CD4-positive, alpha-beta T cell (primary cell): ENCODE measurements at regions of chr6 and their contacts with region 1.

Region 1: GRCh38 chr6:85642774-85643536 is at the start of gene SYNCRIP:
- DNase-seq: peak; percentile 94 to 99 (median 98)
- ATAC-seq: peak; percentile 78
- H3K4me3 ChIP-seq: peak within 1 kb of the TSS; percentile 88
- H3K4me3 Mint-ChIP-seq: peak within 1 kb of the TSS; percentile 100
- H3K27ac ChIP-seq: peak within 1 kb of the TSS; percentile 96 to 99
- H3K27ac Mint-ChIP-seq: peak within 1 kb of the TSS; percentile 100
- H3K4me1 ChIP-seq: peaks cover 15% of the 10 kb centered on the region
- H3K4me1 Mint-ChIP-seq: peaks cover 55% of the 10 kb centered on the region
- H3K27me3 ChIP-seq: no peaks in the 10 kb centered on the region
- H3K27me3 Mint-ChIP-seq: no peaks in the 10 kb centered on the region
- CTCF ChIP-seq: no peak
- total RNA-seq, gene SYNCRIP: 53.2 to 58.3 TPM

Region 2: DNA sequence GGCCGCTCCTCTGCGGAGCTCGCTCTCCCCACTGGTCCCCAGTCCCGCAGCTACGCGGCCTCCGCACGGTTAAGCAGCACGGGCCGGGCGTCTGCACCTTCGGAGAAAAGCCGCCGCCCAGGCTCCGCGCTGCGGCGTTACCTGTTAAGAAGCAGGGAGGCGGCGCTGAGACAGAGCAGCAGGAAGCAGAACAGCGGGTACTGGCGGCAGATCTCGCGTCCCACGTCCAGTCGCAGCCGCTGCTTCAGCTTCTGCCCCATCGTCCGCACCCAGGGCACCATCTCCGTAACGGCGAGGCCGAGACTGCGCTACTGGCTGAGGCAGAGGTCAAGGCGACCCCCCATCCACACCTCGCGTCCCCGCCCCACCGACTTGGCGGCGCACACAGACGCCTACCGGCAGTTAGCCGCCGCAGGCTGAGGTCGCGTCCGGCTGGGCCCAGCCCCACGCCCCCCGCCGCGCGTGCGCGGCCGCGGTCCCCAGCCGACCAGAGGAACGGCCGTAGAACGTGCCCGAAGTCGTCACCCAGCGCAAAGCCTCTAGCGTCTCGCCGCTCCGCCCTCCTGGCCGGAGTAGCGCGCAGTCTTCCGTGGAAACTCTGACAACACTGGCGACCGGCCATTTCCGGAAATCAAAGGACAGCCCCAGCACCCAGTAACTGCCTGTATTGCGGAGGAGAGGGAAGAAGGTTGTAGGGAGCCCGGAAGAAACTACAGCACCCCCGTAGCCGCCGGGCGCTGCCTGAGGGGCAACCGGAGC is 49.3 kb before region 1 on chr6 and contains the start of gene SNX14:
- CTCF ChIA-PET with region 1: interaction called, 8 read pairs
- POLR2A ChIA-PET with region 1: interaction called, 174 read pairs
- intact Hi-C with region 1: loop called (anchors 2 kb)
- DNase-seq: peak; percentile 56 to 89 (median 66)
- ATAC-seq: peak; percentile 72
- H3K4me3 ChIP-seq: peak within 1 kb of the TSS; percentile 86
- H3K4me3 Mint-ChIP-seq: peak within 1 kb of the TSS; percentile 95
- H3K27ac ChIP-seq: peak within 1 kb of the TSS; percentile 92 to 93
- H3K27ac Mint-ChIP-seq: peak within 1 kb of the TSS; percentile 85
- H3K4me1 ChIP-seq: peaks cover 25% of the 10 kb centered on the region
- H3K4me1 Mint-ChIP-seq: peaks cover 58% of the 10 kb centered on the region
- H3K27me3 ChIP-seq: no peaks in the 10 kb centered on the region
- H3K27me3 Mint-ChIP-seq: no peaks in the 10 kb centered on the region
- CTCF ChIP-seq: no peak
- total RNA-seq, gene SNX14: 30.8 to 31.5 TPM

Region 3: DNA sequence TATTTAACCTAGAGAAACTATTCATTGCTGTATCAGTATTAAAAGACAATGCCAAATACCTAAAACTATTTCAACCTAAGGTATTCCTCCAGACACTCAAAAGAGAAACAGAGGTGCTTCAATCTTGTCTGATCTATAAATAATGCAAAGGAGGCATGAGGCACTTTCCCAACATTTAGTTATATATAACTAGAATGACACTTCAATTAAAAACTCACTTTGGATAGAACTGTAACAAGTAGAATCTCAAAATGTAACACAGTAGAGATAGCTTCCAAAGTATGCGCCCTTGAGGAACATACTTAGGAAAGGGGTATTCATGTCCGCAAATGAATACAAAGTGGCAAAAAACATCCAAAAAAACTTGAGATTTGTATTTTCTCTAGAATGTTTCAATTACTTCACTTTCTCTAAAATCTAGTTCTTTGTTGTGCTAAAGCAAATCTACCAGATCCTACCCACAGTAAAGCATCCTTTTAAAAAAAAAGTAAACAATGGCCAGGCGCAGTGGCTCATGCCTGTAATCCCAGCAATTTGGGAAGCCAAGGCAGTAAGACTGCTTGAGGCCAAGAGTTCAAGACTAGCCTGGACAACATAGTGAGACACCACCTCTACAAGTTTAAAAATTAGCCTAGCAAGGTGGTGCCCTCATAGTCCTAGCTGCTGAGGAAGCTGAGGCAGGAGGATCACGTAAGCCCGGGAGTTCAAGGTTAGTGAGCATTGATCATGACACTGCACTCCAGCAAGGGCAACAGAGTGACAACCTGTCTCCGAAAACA is 10.6 kb before region 1 on chr6:
- CTCF ChIA-PET with region 1: no interaction called
- POLR2A ChIA-PET with region 1: interaction called, 13 read pairs
- intact Hi-C with region 1: no loop called
- DNase-seq: no peak
- ATAC-seq: no peak
- H3K4me3 ChIP-seq: no peak overlapping the region
- H3K4me3 Mint-ChIP-seq: no peak overlapping the region
- H3K27ac ChIP-seq: no peak overlapping the region
- H3K27ac Mint-ChIP-seq: no peak overlapping the region
- H3K4me1 ChIP-seq: peaks cover 15% of the 10 kb centered on the region
- H3K4me1 Mint-ChIP-seq: peaks cover 63% of the 10 kb centered on the region
- H3K27me3 ChIP-seq: no peaks in the 10 kb centered on the region
- H3K27me3 Mint-ChIP-seq: no peaks in the 10 kb centered on the region
- CTCF ChIP-seq: no peak

Region 4: GRCh38 chr6:85669735-85670194 is 26.8 kb after region 1 on chr6:
- CTCF ChIA-PET with region 1: interaction called, 6 read pairs
- POLR2A ChIA-PET with region 1: interaction called, 849 read pairs
- intact Hi-C with region 1: no loop called
- DNase-seq: peak; percentile 7 to 83 (median 33)
- ATAC-seq: peak; percentile 94
- H3K4me3 ChIP-seq: no peak overlapping the region
- H3K4me3 Mint-ChIP-seq: peak overlapping the region; percentile 28
- H3K27ac ChIP-seq: peak overlapping the region; percentile 50 to 69
- H3K27ac Mint-ChIP-seq: peak overlapping the region; percentile 89
- H3K4me1 ChIP-seq: peaks cover 22% of the 10 kb centered on the region
- H3K4me1 Mint-ChIP-seq: peaks cover 57% of the 10 kb centered on the region
- H3K27me3 ChIP-seq: no peaks in the 10 kb centered on the region
- H3K27me3 Mint-ChIP-seq: no peaks in the 10 kb centered on the region
- CTCF ChIP-seq: no peak